Right ventricle myocardium inferior (tissue), 1 donor: ENCODE measurements at regions of chr15 and their contacts with region 1.

Region 1: DNA sequence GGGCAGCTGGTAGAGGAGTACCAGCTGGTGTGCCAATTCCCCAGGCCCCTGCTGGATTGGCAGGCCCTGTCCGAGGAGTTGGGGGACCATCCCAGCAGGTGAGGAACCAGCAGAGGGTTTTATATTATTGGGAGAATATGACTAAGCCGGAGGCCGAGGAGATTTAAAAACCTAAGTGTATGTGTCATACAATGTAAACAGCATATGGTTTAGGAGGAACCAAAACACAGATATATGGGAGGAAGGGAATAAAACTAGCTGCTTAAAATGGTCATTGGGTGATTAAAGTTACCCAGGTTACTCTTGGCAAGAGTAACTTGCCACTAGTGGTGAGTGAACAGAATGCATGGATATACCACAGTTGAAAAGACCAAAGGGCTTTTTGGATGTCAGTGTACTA is 22.1 kb downstream of the SNRPN start:
- DNase-seq: no peak
- ATAC-seq: no peak

Region 2: DNA sequence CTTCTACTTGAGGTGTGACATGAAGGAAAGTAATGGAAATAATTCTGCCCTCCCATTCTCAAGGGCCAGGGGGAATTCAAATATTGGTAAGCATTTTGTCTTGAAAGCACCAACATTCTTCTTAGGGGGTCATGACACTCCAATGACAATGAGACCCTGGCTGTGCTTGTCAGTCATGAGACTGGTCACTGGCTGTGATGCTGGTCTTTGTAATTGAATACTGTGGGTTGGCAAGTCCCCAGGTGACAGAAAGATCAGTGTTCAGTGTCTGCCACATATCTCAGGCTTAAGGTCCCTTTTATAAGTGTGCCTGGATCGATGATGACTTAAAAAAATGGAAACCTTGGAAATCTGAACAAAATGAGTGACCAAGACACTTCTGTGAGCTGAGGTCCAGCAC is 129.3 kb after region 1 on chr15:
- intact Hi-C with region 1: loop called (anchors 10 kb)
- DNase-seq: no peak
- ATAC-seq: no peak